ENCODE measurements at regions of chr16 and their contacts with region 1.

Region 1: GRCh38 chr16:67159593-67160406 is at the starts of genes FBXL8 and TRADD:
- DNase-seq: peak; percentile 60 to 79 (median 67)
- H3K4me3 ChIP-seq: peak within 1 kb of the TSS; percentile 81
- H3K27ac ChIP-seq: no peak within 1 kb of the TSS
- H3K4me1 ChIP-seq: peaks cover 18% of the 10 kb centered on the region
- H3K27me3 ChIP-seq: no peaks in the 10 kb centered on the region
- CTCF ChIP-seq: no peak
- EP300 ChIP-seq: no peak
- POLR2A ChIP-seq: peak; percentile 61
- total RNA-seq, gene FBXL8: 8.8 to 23.0 (median 15.0) TPM
- total RNA-seq, gene TRADD: 7.3 to 30.9 (median 15.5) TPM

Region 2: DNA sequence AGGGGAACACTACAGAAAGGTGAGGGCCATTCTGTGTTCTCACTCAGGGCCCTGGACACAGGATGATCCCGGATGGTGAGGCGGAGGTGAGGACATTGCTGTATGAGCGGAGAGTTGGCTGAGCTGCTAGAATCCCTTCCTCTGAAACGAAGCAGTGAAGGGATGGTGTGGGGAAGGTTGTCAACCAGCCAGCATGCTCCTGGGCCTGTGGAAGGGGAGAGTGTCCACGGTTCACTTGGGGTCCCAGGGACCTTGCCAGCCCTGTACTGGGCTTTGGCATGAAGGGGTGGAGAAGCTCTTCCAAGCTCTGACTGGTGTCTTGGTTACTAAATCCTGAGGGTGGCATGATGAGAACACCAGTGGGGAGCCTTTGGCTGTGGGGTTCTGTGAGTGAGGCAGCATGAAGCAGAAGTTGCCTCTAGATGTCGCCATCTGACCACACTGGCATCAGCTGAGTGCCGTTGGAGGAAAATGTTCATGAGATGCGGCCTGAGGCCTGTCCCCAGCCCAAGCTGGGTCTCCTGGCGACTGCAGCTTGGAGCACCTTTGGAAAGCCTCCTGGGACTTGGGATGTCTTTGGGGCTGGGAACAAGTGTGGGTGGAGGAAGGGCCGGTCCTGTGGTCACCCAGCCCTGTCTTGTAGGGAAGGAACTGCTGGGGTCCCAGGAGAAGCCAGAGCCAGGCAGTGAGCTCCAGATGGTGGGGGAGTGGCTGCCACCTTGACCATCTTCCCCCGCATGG is 264.7 kb before region 1 on chr16:
- intact Hi-C with region 1: loop called in 1 of 4 experiments (anchors 10 kb)
- DNase-seq: peak; percentile 74 to 82 (median 81)
- H3K4me3 ChIP-seq: no peak overlapping the region
- H3K27ac ChIP-seq: no peak overlapping the region
- H3K4me1 ChIP-seq: peaks cover 19% of the 10 kb centered on the region
- H3K27me3 ChIP-seq: no peaks in the 10 kb centered on the region
- CTCF ChIP-seq: peak; percentile 83 to 84 (median 84)
- EP300 ChIP-seq: no peak
- POLR2A ChIP-seq: no peak

Region 3: DNA sequence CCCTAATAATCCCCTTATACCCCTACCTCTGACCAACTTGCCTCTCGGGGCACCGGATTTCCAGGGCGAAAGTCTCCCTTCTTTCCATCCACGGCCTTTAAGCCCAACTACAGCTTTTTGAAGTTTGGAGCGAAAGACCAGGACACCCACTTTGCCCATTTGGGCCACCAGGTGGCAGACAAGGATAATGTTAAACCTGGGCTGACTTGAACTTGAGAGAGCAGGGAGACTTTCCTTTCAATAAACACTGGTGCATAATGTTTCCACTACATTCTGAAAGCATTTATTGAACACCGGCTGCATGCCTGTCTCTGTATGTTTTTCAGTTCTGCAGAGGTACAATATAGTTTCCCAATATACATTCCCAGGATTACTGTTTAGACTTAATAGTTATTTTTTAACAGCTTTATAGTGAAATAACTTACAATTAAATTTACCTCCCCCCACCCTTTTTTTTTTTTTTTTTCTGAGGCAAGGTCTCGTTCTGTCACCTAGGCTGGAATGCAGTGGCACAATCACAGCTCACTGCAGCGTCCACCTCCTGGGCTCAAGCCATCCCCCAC is 205.6 kb before region 1 on chr16:
- intact Hi-C with region 1: loop called in 1 of 4 experiments (anchors 5 kb)
- DNase-seq: peak; percentile 73 to 87 (median 82)
- H3K4me3 ChIP-seq: no peak overlapping the region
- H3K27ac ChIP-seq: no peak overlapping the region
- H3K4me1 ChIP-seq: no peaks in the 10 kb centered on the region
- H3K27me3 ChIP-seq: no peaks in the 10 kb centered on the region
- CTCF ChIP-seq: peak; percentile 66 to 79 (median 68)
- EP300 ChIP-seq: no peak
- POLR2A ChIP-seq: no peak

Region 4: GRCh38 chr16:66961065-66961744 is 198.6 kb before region 1 on chr16 and contains the start of gene CES3:
- intact Hi-C with region 1: loop called in 1 of 4 experiments (anchors 5 kb)
- DNase-seq: peak in 1 of 5 donors; percentile 63
- H3K4me3 ChIP-seq: no peak within 1 kb of the TSS
- H3K27ac ChIP-seq: no peak within 1 kb of the TSS
- H3K4me1 ChIP-seq: no peaks in the 10 kb centered on the region
- H3K27me3 ChIP-seq: no peaks in the 10 kb centered on the region
- CTCF ChIP-seq: no peak
- EP300 ChIP-seq: no peak
- POLR2A ChIP-seq: no peak
- total RNA-seq, gene CES3: 0.45 to 2.3 (median 1.4) TPM

Region 5: GRCh38 chr16:66977341-66978113 is 182.3 kb before region 1 on chr16:
- intact Hi-C with region 1: loop called (anchors 1 to 2 kb)
- DNase-seq: peak; percentile 87 to 95 (median 93)
- H3K4me3 ChIP-seq: no peak overlapping the region
- H3K27ac ChIP-seq: no peak overlapping the region
- H3K4me1 ChIP-seq: no peaks in the 10 kb centered on the region
- H3K27me3 ChIP-seq: no peaks in the 10 kb centered on the region
- CTCF ChIP-seq: peak; percentile 75 to 99 (median 97)
- EP300 ChIP-seq: no peak
- POLR2A ChIP-seq: peak; percentile 34